ENCODE measurements at regions of chr19 and their contacts with region 1.

Region 1: GRCh38 chr19:3087769-3088168 is 6.4 kb upstream of the GNA11 start:
- DNase-seq: no peak
- ATAC-seq: no peak
- H3K4me3 ChIP-seq: no peak overlapping the region
- H3K27ac ChIP-seq: no peak overlapping the region
- H3K4me1 ChIP-seq: no peaks in the 10 kb centered on the region
- H3K27me3 ChIP-seq: no peaks in the 10 kb centered on the region
- CTCF ChIP-seq: no peak

Region 2: DNA sequence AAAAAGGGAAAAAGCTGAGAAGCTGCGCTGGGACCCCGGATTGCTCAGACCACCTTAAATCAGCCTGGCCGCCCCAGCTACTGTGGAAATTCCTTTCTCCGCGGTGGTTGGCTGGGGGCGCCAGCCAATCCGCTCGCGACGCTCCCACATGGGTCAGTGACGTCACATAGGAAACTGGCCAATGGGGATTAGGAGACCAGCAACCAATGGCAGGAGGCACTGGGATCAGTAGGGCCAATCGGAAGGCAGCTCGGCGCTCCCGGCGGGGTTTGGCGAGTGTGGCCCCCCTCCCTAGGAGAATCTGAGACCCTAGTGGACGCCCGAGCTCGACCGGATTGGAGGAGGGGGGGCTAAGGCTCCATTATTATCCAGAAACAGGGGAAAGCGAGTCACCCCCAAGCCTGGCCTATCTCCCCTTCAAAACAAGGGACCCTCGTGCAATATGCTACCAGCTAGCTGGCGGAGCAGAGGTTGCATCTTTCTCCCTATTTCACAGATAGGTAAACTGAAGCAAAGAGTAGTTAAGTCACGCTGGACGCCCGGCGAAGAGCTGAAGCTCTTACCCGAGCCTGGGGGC is 52.1 kb before region 1 on chr19:
- CTCF ChIA-PET with region 1: interaction called, 10 read pairs
- POLR2A ChIA-PET with region 1: interaction called, 7 read pairs
- in situ Hi-C with region 1: no loop called
- intact Hi-C with region 1: no loop called
- DNase-seq: peak; percentile 87
- ATAC-seq: peak; percentile 93
- H3K4me3 ChIP-seq: peak overlapping the region; percentile 55 to 83
- H3K27ac ChIP-seq: peak overlapping the region; percentile 90
- H3K4me1 ChIP-seq: peaks cover 11% of the 10 kb centered on the region
- H3K27me3 ChIP-seq: no peaks in the 10 kb centered on the region
- CTCF ChIP-seq: no peak

Region 3: GRCh38 chr19:3176603-3177501 is 89.1 kb after region 1 on chr19:
- CTCF ChIA-PET with region 1: no interaction called
- POLR2A ChIA-PET with region 1: no interaction called
- in situ Hi-C with region 1: no loop called
- intact Hi-C with region 1: no loop called
- DNase-seq: no peak
- ATAC-seq: peak; percentile 88
- H3K4me3 ChIP-seq: no peak overlapping the region
- H3K27ac ChIP-seq: no peak overlapping the region
- H3K4me1 ChIP-seq: peaks cover 12% of the 10 kb centered on the region
- H3K27me3 ChIP-seq: no peaks in the 10 kb centered on the region
- CTCF ChIP-seq: no peak

Region 4: GRCh38 chr19:3202346-3202745 is 114.6 kb after region 1 on chr19:
- CTCF ChIA-PET with region 1: no interaction called
- POLR2A ChIA-PET with region 1: interaction called, 16 read pairs
- in situ Hi-C with region 1: no loop called
- intact Hi-C with region 1: no loop called
- DNase-seq: no peak
- ATAC-seq: no peak
- H3K4me3 ChIP-seq: no peak overlapping the region
- H3K27ac ChIP-seq: no peak overlapping the region
- H3K4me1 ChIP-seq: no peaks in the 10 kb centered on the region
- H3K27me3 ChIP-seq: no peaks in the 10 kb centered on the region
- CTCF ChIP-seq: no peak